HAP-1 (cell line): ENCODE measurements at regions of chr16 and their contacts with region 1.

Region 1: GRCh38 chr16:58336332-58337089 is 41.7 kb upstream of the PRSS54 start:
- DNase-seq: peak; percentile 79 to 91
- H3K4me3 ChIP-seq: no peak overlapping the region
- H3K4me1 ChIP-seq: peaks cover 4% of the 10 kb centered on the region; the same call in 1 of the 2 replicates
- H3K27me3 ChIP-seq: no peaks in the 10 kb centered on the region

Region 2: DNA sequence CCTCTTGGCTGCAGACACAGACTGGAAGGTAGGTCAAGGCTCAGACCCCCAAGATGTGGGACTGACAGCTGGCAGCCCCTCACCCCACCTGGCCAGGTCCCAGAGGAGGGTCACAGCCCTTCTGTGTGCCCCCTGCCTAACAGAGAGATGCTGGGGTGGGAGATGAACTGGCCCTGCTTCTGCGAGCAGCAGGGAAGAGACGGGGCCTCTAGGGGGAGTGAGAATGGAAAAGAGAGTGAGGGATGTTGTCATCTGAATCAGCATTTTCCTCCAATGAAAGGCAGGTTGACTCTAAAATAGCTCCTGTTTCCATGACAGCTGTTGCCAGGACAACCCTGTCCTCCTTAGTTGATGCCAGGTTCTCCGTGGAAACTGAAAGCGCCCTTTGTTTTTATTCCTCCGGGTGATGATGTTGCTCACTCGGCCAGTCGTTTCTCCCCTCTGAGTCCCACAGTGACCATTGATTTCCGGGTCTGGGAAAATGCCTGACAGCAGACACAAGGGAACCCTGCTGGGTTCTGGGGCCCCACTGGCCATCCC is 158.5 kb after region 1 on chr16:
- in situ Hi-C with region 1: loop called (anchors 5 kb)
- DNase-seq: peak; percentile 86 to 90
- H3K4me3 ChIP-seq: no peak overlapping the region
- H3K4me1 ChIP-seq: no peaks in the 10 kb centered on the region
- H3K27me3 ChIP-seq: no peaks in the 10 kb centered on the region

Region 3: GRCh38 chr16:58755989-58756649 is 419.6 kb after region 1 on chr16:
- in situ Hi-C with region 1: loop called (anchors 25 kb)
- DNase-seq: peak; percentile 73 to 83
- H3K4me3 ChIP-seq: no peak overlapping the region
- H3K4me1 ChIP-seq: peaks cover 8% of the 10 kb centered on the region
- H3K27me3 ChIP-seq: no peaks in the 10 kb centered on the region